Ascending aorta (tissue), 2 donors: ENCODE measurements at regions of chr7 and their contacts with region 1.

Region 1: GRCh38 chr7:120805636-120806388 is 52.1 kb downstream of the TSPAN12 start:
- DNase-seq: peak in 1 of 2 donors; percentile 67
- H3K4me3 ChIP-seq: no peak overlapping the region
- H3K27ac ChIP-seq: peak overlapping the region in 1 of 2 donors; percentile 6
- H3K4me1 ChIP-seq: peaks cover 0 to 5% of the 10 kb centered on the region in 2 donors
- H3K27me3 ChIP-seq: no peaks in the 10 kb centered on the region
- CTCF ChIP-seq: peak; percentile 62 to 83 (median 78)

Region 2: GRCh38 chr7:119996634-119997033 is 809.2 kb before region 1 on chr7:
- intact Hi-C with region 1: no loop called
- DNase-seq: no peak
- H3K4me3 ChIP-seq: no peak overlapping the region
- H3K27ac ChIP-seq: no peak overlapping the region
- H3K4me1 ChIP-seq: no peaks in the 10 kb centered on the region
- H3K27me3 ChIP-seq: no peaks in the 10 kb centered on the region
- CTCF ChIP-seq: no peak

Region 3: DNA sequence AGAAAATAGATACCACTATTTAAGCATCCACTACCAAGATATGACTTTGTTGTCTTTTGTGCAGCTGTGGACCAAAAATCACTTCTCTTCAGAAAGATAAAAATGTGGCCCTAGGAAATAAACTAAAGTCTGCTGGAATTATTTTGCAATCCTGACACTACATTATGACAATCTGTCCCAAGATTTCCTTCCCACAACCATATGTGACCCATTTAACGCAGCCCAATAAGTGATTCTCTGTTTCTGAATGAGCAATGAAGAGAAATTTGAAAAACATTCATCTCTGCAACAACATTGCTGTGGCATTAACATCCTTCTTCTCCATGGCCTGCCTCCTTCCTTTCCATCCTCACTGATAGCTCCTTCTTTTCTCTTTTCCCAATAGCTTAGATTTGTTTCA is 159.8 kb before region 1 on chr7:
- intact Hi-C with region 1: no loop called
- DNase-seq: no peak
- H3K4me3 ChIP-seq: no peak overlapping the region
- H3K27ac ChIP-seq: no peak overlapping the region
- H3K4me1 ChIP-seq: no peaks in the 10 kb centered on the region
- H3K27me3 ChIP-seq: no peaks in the 10 kb centered on the region
- CTCF ChIP-seq: no peak

Region 4: DNA sequence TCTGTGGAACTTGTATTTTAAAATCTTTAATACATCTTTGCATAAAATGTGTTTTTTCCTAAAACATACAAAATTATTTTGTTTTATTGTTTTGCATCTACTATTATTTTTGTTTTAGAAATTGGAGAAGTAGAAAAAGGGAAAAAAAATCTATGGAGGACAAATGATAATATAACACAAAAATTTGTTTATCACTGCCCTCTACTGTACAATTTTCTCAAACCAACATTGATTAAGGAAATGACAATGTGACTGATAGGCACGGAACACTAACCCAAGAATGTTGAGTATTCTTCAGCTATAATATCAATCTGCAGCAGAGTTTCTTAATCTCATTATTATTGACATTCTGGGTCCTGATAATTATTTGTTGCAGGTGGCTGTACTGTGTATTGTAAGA is 135.3 kb after region 1 on chr7:
- intact Hi-C with region 1: loop called (anchors 2 kb)
- DNase-seq: no peak
- H3K4me3 ChIP-seq: no peak overlapping the region
- H3K27ac ChIP-seq: no peak overlapping the region
- H3K4me1 ChIP-seq: no peaks in the 10 kb centered on the region
- H3K27me3 ChIP-seq: no peaks in the 10 kb centered on the region
- CTCF ChIP-seq: peak in 1 of 3 experiments; percentile 32